ENCODE measurements at regions of chr3 and their contacts with region 1.

Region 1: GRCh38 chr3:183122257-183122932 is 23.1 kb upstream of the MCCC1 start:
- DNase-seq: peak; percentile 18
- ATAC-seq: 0 out of 3 replicates have a peak, but pooled peaks have one; percentile 35
- H3K4me3 ChIP-seq: no peak overlapping the region
- H3K27ac ChIP-seq: no peak overlapping the region
- H3K4me1 ChIP-seq: no peaks in the 10 kb centered on the region
- H3K27me3 ChIP-seq: peaks cover 0 to 3% of the 10 kb centered on the region in 2 experiments; a peak in 2 of 5 replicates
- CTCF ChIP-seq: peak; percentile 71
- EP300 ChIP-seq: no peak
- POLR2A ChIP-seq: no peak
- RAD21 ChIP-seq: peak; percentile 52

Region 2: DNA sequence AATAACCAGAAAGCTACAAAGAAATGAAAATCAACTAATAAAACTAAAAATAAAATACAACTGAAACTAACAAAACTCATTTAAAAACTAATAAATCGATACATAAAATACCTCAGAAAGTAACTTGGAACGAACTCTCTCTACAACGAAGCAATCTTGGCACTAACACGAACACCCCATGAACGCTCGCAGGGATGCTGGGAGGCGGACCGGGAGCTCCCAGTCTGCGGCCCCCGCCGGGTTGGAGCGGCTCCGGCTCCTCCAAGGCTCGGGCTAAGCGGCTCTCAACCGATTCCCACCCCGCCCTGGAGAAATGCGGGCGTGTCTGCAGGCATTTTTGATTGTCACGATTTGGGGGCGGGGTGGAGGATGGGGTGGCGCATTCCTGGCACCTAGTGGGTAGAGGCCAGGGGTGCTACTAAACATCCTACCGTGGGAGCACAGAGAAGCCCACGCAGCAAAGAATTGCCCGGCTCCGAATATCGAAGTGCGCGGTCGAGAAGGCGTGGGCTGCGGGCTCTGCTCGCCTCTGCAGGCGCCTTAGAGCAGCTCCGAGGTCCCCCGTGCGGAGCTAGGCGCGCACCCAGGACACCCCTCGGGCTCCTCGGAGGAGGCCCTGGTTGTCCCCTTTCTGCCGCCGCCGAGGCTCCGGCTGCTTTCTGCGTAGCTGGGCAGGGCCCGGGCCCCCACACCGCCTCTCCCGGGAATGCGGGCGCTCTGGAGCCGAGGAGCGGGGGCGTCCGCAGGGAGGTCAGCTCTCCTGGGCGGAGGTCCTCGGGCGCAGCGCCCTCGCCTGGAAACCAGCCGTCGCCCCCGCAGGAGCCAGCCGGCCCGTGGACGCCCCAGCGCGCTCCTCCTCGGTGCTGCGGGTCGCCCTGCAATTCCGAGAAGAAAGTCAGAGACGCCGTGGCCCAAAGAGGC is 56.5 kb after region 1 on chr3:
- CTCF ChIA-PET with region 1: interaction called, 7 read pairs
- POLR2A ChIA-PET with region 1: no interaction called
- in situ Hi-C with region 1: no loop called
- intact Hi-C with region 1: loop called (anchors 1 kb)
- DNase-seq: no peak
- ATAC-seq: peak; percentile 86
- H3K4me3 ChIP-seq: peak overlapping the region in 2 of 3 experiments; percentile 21 to 57; a peak in 3 of 6 replicates
- H3K27ac ChIP-seq: no peak overlapping the region
- H3K4me1 ChIP-seq: no peaks in the 10 kb centered on the region; the same call in 1 of the 2 replicates
- H3K27me3 ChIP-seq: peaks cover 8 to 34% of the 10 kb centered on the region in 2 experiments
- CTCF ChIP-seq: peak; percentile 58
- EP300 ChIP-seq: no peak
- POLR2A ChIP-seq: no peak
- RAD21 ChIP-seq: 0 out of 2 replicates have a peak, but pooled peaks have one; percentile 30

Region 3: DNA sequence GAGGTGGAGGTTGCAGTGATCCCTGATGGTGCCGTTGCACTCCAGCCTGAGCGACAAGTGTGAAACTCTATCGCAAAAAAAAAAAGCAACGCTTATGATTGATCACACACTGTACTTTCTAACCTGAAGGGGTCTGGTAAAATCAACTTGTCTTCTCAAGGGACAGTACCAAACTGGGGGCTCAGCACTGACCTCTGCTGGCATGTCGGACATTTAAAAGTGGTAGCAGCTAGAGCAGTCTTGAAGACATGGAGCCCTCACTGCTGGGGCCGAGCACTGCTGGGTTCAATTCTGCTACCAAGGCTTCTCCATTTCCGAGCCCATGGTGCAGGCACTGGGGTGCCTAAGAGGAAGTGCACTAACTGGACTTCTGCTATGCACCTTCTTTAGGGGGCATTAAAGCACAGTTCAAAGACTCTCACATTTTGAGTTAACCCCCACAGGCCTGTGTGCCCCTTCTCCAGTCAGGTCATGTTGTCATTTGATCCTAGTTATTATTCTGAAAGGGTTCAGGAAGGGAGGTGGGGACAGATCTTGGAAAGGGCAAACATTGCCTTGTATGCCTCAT is 66.6 kb after region 1 on chr3:
- CTCF ChIA-PET with region 1: interaction called, 3 read pairs
- POLR2A ChIA-PET with region 1: no interaction called
- in situ Hi-C with region 1: no loop called
- intact Hi-C with region 1: loop called (anchors 1 kb)
- DNase-seq: peak; percentile 10
- ATAC-seq: peak; percentile 88
- H3K4me3 ChIP-seq: no peak overlapping the region
- H3K27ac ChIP-seq: no peak overlapping the region
- H3K4me1 ChIP-seq: no peaks in the 10 kb centered on the region
- H3K27me3 ChIP-seq: peaks cover 0 to 14% of the 10 kb centered on the region in 2 experiments; a peak in 3 of 5 replicates
- CTCF ChIP-seq: peak; percentile 55
- EP300 ChIP-seq: no peak
- POLR2A ChIP-seq: no peak
- RAD21 ChIP-seq: no peak

Measured in HepG2 (cell line).